Activated CD8-positive, alpha-beta T cell treated with anti-CD3 and anti-CD28 coated beads, Interleukin-2, amount 10 ng/mL, durations not matched to agents 7 days and 5 days (primary cell): ENCODE measurements at regions of chr15 and their contacts with region 1.

Region 1: GRCh38 chr15:63752075-63752684 is 81.6 kb downstream of the HERC1 start:
- DNase-seq: peak; percentile 66
- ATAC-seq: peak; percentile 69
- H3K4me3 Mint-ChIP-seq: no peak overlapping the region
- H3K27ac Mint-ChIP-seq: no peak overlapping the region
- H3K4me1 Mint-ChIP-seq: no peaks in the 10 kb centered on the region
- H3K27me3 Mint-ChIP-seq: no peaks in the 10 kb centered on the region

Region 2: GRCh38 chr15:63735449-63735848 is 16.7 kb before region 1 on chr15:
- CTCF ChIA-PET with region 1: interaction called, 20 read pairs
- POLR2A ChIA-PET with region 1: no interaction called
- DNase-seq: no peak
- ATAC-seq: no peak
- H3K4me3 Mint-ChIP-seq: no peak overlapping the region
- H3K27ac Mint-ChIP-seq: no peak overlapping the region
- H3K4me1 Mint-ChIP-seq: peaks cover 8% of the 10 kb centered on the region
- H3K27me3 Mint-ChIP-seq: no peaks in the 10 kb centered on the region

Region 3: GRCh38 chr15:63792584-63792983 is 40.4 kb after region 1 on chr15:
- CTCF ChIA-PET with region 1: no interaction called
- POLR2A ChIA-PET with region 1: no interaction called
- DNase-seq: no peak
- ATAC-seq: no peak
- H3K4me3 Mint-ChIP-seq: no peak overlapping the region
- H3K27ac Mint-ChIP-seq: no peak overlapping the region
- H3K4me1 Mint-ChIP-seq: peaks cover 16% of the 10 kb centered on the region
- H3K27me3 Mint-ChIP-seq: no peaks in the 10 kb centered on the region

Region 4: GRCh38 chr15:63818191-63818590 is 66.0 kb after region 1 on chr15:
- CTCF ChIA-PET with region 1: interaction called, 16 read pairs
- POLR2A ChIA-PET with region 1: no interaction called
- DNase-seq: no peak
- ATAC-seq: no peak
- H3K4me3 Mint-ChIP-seq: no peak overlapping the region
- H3K27ac Mint-ChIP-seq: peak overlapping the region; percentile 24
- H3K4me1 Mint-ChIP-seq: peaks cover 49% of the 10 kb centered on the region
- H3K27me3 Mint-ChIP-seq: no peaks in the 10 kb centered on the region

Region 5: GRCh38 chr15:63945007-63945788 is 193.0 kb after region 1 on chr15:
- CTCF ChIA-PET with region 1: interaction called, 11 read pairs
- POLR2A ChIA-PET with region 1: no interaction called
- DNase-seq: peak; percentile 80
- ATAC-seq: peak; percentile 87
- H3K4me3 Mint-ChIP-seq: no peak overlapping the region
- H3K27ac Mint-ChIP-seq: no peak overlapping the region
- H3K4me1 Mint-ChIP-seq: peaks cover 14% of the 10 kb centered on the region
- H3K27me3 Mint-ChIP-seq: no peaks in the 10 kb centered on the region

Region 6: GRCh38 chr15:64038878-64039610 is 286.9 kb after region 1 on chr15:
- CTCF ChIA-PET with region 1: interaction called, 76 read pairs
- POLR2A ChIA-PET with region 1: no interaction called
- DNase-seq: no peak
- ATAC-seq: no peak
- H3K4me3 Mint-ChIP-seq: no peak overlapping the region
- H3K27ac Mint-ChIP-seq: no peak overlapping the region
- H3K4me1 Mint-ChIP-seq: no peaks in the 10 kb centered on the region
- H3K27me3 Mint-ChIP-seq: peaks cover 11% of the 10 kb centered on the region

Region 7: DNA sequence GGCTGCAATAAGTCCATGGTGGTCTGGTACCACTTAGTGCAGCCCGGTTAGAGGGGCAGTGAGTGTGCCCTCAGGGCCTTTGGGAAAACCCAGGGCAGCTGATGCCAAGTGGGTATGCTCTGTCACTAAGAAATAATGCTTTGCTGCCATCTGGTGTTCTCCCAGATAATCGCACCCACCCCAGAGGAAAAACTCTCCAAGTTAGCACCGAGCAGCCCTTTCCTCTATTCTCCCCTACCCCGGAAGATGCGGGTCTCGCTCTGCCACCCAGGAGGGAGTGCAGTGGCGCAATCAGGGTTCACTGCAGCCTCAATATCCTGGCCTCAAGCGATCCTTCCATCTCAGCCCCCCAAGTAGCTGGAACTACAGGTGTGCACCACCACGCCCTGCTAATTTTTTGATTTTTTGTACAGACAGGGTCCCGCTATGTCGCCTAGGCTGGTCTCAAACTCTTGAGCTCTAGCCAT is 315.4 kb after region 1 on chr15:
- CTCF ChIA-PET with region 1: interaction called, 102 read pairs
- POLR2A ChIA-PET with region 1: interaction called, 4 read pairs
- DNase-seq: peak; percentile 79
- ATAC-seq: peak; percentile 89
- H3K4me3 Mint-ChIP-seq: no peak overlapping the region
- H3K27ac Mint-ChIP-seq: peak overlapping the region; percentile 71
- H3K4me1 Mint-ChIP-seq: peaks cover 26% of the 10 kb centered on the region
- H3K27me3 Mint-ChIP-seq: no peaks in the 10 kb centered on the region